HCT116 (cell line): ENCODE measurements at regions of chr18 and their contacts with region 1.

Region 1: DNA sequence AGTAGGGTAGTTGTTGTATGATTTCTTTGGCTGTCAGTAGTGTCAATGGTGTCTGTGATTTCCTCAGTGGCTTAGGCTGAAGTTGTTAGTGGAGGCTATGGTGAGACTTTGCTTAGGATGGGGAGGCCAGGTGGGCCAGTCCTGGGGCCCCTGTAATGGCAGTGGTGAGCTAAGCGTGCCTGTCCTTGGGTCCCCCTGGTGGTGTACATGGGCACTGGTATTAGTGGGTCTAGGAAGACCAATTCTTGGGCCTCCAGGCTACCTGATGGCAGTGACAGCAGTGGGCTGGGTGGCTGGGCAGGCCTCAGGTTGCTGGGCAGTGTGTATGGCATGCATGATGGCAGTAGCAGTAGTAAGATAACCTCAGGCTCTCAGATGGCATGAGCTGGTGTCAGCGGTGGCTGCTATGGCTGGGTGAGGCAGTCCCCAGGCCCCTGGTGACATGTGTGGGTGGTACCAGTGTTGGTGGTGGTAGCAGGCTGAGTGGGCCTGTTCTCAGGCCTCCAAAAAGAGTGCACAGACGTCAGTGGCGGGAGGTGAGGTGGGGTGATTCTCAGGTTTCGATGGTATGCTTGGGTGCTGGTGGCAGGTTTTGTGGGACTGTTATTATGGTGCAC is 103.2 kb downstream of the KLHL14 start:
- DNase-seq: no peak
- ATAC-seq: peak; percentile 78
- H3K4me3 ChIP-seq: no peak overlapping the region
- H3K27ac ChIP-seq: no peak overlapping the region
- H3K4me1 ChIP-seq: no peaks in the 10 kb centered on the region
- H3K27me3 ChIP-seq: 0 out of 2 replicates have a peak, but pooled peaks cover 19% of the 10 kb centered on the region
- CTCF ChIP-seq: peak in 2 of 3 experiments; percentile 46 to 49; a peak in 4 of 6 replicates
- POLR2A ChIP-seq: no peak
- RAD21 ChIP-seq: no peak

Region 2: DNA sequence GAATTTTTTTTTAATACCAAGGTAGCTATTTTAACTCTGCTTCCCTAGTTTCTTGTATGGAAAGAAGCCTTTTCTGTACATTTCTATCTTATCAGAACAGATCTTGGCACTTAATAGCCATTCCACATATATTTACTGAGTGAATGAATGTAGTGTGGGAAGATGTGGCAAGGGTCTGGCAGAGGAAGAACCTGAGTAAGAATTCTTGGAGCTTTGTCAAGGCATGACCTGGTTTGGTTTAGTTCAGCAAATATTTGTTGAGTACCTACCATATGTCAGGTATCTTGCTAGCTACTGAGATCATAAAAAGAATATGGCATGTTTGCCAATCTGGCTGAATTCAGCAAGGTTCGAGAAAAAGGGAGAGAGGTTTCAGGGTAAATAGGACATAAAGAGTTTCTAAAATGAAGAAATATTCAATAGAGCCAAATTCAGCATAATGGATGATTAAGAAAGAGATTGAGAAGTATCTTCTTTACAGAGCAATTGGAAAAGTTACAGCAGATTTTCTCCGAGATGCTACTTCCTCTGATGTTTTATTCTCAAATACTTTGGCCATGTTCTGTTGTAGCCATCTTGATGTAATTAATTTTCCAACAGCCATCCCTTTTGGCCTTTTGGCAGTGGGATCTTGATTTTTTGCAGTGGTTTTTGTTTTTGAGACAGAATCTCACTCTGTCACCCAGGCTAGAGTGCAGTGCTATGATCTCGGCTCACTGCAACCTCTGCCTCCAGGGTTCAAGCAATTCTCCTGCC is 501.5 kb before region 1 on chr18:
- CTCF ChIA-PET with region 1: no interaction called
- POLR2A ChIA-PET with region 1: no interaction called
- RAD21 ChIA-PET with region 1: no interaction called
- intact Hi-C with region 1: loop called (anchors 10 kb)
- DNase-seq: no peak
- ATAC-seq: no peak
- H3K4me3 ChIP-seq: no peak overlapping the region
- H3K27ac ChIP-seq: no peak overlapping the region
- H3K4me1 ChIP-seq: no peaks in the 10 kb centered on the region
- H3K27me3 ChIP-seq: no peaks in the 10 kb centered on the region
- CTCF ChIP-seq: no peak
- POLR2A ChIP-seq: no peak
- RAD21 ChIP-seq: no peak

Region 3: GRCh38 chr18:32607816-32608215 is 61.8 kb before region 1 on chr18:
- CTCF ChIA-PET with region 1: no interaction called
- POLR2A ChIA-PET with region 1: no interaction called
- RAD21 ChIA-PET with region 1: no interaction called
- intact Hi-C with region 1: no loop called
- DNase-seq: no peak
- ATAC-seq: no peak
- H3K4me3 ChIP-seq: no peak overlapping the region
- H3K27ac ChIP-seq: no peak overlapping the region
- H3K4me1 ChIP-seq: no peaks in the 10 kb centered on the region
- H3K27me3 ChIP-seq: 0 out of 2 replicates have a peak, but pooled peaks cover 14% of the 10 kb centered on the region
- CTCF ChIP-seq: no peak
- POLR2A ChIP-seq: no peak
- RAD21 ChIP-seq: no peak

Region 4: GRCh38 chr18:32956591-32957315 is 287.1 kb after region 1 on chr18:
- CTCF ChIA-PET with region 1: no interaction called
- POLR2A ChIA-PET with region 1: no interaction called
- RAD21 ChIA-PET with region 1: no interaction called
- intact Hi-C with region 1: no loop called
- DNase-seq: no peak
- ATAC-seq: no peak
- H3K4me3 ChIP-seq: no peak overlapping the region
- H3K27ac ChIP-seq: no peak overlapping the region
- H3K4me1 ChIP-seq: no peaks in the 10 kb centered on the region
- H3K27me3 ChIP-seq: no peaks in the 10 kb centered on the region
- CTCF ChIP-seq: no peak
- POLR2A ChIP-seq: no peak
- RAD21 ChIP-seq: no peak